ENCODE measurements at regions of chr12 and their contacts with region 1.

Region 1: DNA sequence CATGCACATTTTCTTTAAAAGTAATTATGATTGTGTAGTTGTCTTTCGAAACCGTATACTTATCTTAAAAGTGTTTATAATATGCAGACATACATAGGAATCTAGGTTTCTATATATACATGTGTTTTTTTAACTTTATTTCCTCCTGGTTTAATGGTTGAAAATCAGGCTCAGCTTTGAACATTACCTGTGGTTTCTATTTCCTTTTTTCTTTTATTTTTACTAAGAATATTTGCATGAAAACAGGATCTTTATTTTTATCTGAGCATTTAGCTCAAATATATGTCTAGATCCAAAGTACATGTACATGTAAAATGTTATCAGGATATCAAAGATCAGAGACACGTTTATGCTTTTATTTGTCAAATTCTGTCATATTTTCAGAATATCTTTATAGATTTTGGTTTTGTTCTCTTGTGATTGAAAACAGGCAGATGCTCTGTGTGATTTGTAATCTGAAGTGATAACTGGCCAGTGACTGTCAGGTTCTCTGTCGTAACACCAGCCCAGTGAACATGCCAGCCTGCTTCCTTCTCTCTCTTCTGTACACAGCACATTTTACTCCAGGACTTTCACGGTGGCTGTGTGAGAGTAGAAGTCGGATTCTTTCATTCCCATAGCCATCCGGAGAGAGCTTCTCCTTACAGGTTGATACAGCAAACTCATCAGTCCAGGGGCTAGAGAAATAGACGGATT is 13.7 kb downstream of the TCTN1 start:
- DNase-seq: peak; percentile 55
- H3K4me3 ChIP-seq: peak overlapping the region; percentile 47
- H3K27ac ChIP-seq: peak overlapping the region; percentile 71
- H3K4me1 ChIP-seq: peaks cover 48% of the 10 kb centered on the region
- CTCF ChIP-seq: no peak

Region 2: DNA sequence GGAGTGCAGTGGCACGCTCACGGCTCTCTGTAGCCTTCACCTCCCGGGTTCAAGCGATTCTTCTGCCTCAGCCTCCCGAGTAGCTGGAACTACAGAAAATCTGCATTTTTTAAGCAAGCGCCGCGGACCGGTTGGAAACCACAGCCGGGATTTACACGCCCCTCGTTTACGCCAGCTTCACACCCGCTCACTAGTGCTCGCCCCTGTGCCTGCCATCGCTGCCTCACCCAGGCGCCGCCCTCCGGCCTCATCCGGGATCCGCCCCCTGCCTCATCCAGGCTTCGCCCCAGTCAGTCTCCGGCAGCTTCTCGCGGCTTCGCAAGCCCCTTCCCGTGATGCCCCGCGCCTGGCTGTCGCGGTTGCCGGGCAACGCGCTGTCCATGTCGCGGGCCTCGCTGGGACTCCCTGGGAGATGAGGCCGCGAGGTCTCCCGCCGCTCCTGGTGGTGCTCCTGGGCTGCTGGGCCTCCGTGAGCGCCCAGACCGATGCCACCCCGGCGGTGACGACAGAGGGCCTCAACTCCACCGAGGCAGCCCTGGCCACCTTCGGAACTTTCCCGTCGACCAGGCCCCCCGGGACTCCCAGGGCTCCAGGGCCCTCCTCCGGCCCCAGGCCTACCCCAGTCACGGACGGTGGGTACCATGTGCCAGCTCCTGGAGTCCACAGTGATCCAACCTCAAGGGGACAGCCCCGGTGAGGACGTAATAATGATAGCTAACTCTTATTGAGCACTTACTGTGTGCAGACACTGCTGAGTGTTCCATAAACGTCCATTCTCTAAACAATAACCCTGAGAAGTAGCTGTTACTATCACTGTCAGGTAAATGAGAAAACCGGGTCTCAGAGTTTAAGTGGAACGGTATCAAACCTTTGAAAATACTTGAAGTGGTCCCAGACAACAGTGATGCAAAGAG is 13.6 kb before region 1 on chr12 and contains the start of gene TCTN1:
- CTCF ChIA-PET with region 1: interaction called, 3 read pairs
- POLR2A ChIA-PET with region 1: interaction called, 20 read pairs
- intact Hi-C with region 1: no loop called
- DNase-seq: peak; percentile 95
- H3K4me3 ChIP-seq: peak within 1 kb of the TSS; percentile 73
- H3K27ac ChIP-seq: peak within 1 kb of the TSS; percentile 20
- H3K4me1 ChIP-seq: peaks cover 58% of the 10 kb centered on the region
- CTCF ChIP-seq: no peak
- total RNA-seq, gene TCTN1: 4.0 and 8.7 TPM in 2 replicates

Region 3: DNA sequence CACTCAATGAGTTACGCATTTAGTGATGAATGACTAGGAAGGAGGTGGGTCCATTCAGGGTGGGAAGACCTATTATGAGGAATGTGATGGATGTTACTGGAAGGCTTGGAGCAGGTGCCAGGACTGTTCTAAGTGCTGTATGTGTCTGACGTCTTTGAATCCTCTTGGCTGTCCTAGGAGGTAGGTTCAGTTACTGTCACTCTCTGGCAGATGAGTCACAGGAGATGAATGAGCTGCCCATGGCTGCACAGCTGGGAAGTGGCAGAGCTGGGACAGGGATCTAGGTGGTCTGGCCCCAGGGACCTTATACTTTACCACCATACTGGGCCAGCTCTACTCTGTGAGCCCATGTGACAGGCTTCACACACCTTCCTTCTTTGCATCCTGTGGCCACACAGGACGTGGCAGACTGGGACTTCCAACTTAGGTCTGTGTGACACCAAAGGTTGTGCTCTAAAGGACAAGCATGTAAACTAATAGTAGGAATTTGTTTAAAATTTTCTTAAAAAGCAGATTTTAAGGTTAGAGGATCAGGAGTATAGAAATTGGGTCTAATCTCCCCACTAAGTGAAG is 10.3 kb after region 1 on chr12:
- CTCF ChIA-PET with region 1: no interaction called
- POLR2A ChIA-PET with region 1: interaction called, 16 read pairs
- intact Hi-C with region 1: no loop called
- DNase-seq: no peak
- H3K4me3 ChIP-seq: no peak overlapping the region
- H3K27ac ChIP-seq: no peak overlapping the region
- H3K4me1 ChIP-seq: peaks cover 76% of the 10 kb centered on the region
- CTCF ChIP-seq: no peak

Region 4: DNA sequence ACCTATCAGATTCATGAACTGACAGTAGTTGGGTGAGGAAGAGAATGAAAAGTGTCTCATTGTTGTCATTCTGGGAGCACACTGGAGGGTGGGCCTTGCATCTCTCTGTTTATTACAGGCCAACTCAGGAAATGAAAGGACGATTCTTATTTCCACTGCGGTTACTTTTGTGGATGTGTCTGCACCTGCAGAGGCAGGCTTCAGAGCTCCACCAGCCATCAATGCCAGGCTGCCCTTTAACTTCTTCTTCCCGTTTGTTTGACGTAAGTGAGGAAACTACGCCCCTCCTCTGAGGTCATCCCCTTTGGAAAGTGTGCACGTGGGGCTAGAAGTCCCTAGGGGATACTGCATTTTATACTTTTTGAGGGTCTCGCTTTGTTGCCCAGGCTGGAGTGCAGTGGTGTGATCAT is 20.0 kb after region 1 on chr12:
- CTCF ChIA-PET with region 1: no interaction called
- POLR2A ChIA-PET with region 1: interaction called, 8 read pairs
- intact Hi-C with region 1: loop called (anchors 2 kb)
- DNase-seq: peak; percentile 92
- H3K4me3 ChIP-seq: peak overlapping the region; percentile 16
- H3K27ac ChIP-seq: peak overlapping the region; percentile 45
- H3K4me1 ChIP-seq: peaks cover 44% of the 10 kb centered on the region
- CTCF ChIP-seq: no peak

Region 5: DNA sequence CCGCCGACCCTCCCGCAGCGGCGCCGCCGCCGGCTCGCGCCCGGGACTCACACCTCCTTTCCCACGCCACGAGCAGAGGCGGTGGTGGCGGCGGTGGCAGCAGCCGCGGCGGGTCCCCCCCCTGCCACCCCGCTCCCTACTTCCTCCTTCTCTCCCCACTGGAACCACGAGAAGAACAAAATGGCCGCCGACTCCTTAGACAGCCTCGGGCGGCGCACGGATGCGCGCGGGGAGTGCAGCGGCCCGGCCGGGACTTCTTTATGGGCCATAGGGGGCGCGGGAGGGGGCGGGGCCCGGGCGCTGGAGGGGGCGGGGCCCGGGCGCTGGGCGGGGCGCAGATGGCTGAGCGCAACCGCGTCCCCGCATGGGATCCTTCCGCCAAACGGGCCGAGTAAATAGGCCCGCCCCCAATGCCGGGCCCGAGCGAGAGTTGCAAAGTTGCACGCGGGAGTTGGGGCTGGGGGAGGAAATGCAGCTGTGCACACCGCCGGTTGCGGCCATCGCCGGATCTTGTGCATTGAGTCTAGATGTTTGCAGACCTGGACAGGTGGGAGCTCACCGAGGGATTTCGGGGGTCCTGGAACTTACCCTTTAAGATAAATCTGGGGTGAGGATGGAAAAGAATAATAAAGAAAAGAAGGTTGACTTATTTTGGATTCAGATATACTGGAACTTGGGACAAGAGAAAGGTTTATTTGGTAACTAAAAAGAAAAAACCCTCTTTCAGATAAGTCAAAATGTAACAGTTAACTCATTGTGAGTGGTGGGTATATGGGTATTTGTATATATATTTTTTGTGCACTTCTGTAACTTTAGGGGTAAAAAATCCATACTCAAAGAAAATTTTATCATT is 115.3 kb after region 1 on chr12 and contains the start of gene PPP1CC:
- CTCF ChIA-PET with region 1: no interaction called
- POLR2A ChIA-PET with region 1: interaction called, 3 read pairs
- intact Hi-C with region 1: loop called (anchors 5 kb)
- DNase-seq: peak; percentile 98
- H3K4me3 ChIP-seq: peak within 1 kb of the TSS; percentile 86
- H3K27ac ChIP-seq: peak within 1 kb of the TSS; percentile 62
- H3K4me1 ChIP-seq: peaks cover 40% of the 10 kb centered on the region
- CTCF ChIP-seq: no peak
- total RNA-seq, gene PPP1CC: 140 and 146 TPM in 2 replicates

Measured in OCI-LY7 (cell line).